GM10248 (cell line): ENCODE measurements at regions of chr5 and their contacts with region 1.

Region 1: DNA sequence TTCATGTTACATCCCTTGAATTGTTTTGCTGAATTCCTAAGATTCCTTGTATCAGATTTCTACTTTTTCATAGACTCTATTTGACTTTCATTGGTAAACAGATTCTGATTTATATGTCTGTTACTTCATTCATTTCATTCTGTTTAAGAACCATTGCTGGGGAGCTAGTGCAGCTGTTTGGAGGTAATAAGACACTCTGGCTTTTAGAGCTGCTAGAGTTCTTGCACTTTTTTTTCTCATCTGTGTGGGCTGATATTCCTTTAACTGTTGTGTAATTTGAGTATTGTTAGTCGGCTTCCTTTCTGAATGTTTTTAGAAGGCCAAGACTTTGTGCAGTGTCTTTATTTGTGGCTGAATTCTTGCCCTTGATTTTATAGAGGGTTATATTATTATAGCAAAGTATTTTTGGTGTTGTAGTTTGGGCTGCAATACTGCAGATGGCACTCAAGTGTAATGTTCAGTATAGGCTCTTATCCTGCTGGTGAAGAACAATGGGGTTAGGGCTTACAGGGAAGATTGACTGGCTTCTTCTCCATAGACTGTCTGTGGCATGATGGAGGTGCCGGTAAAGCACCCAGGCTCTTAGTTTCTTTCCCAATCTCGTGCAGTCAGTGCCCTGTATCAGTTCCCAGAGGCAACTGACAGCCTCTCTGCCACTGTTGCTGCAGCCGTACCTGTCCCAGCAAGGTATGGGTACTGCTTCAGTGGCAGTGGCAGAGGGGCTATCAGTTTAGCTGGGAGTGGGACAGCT is 162.2 kb downstream of the OXCT1 start:
- DNase-seq: peak; percentile 34
- CTCF ChIP-seq: peak; percentile 53

Region 2: DNA sequence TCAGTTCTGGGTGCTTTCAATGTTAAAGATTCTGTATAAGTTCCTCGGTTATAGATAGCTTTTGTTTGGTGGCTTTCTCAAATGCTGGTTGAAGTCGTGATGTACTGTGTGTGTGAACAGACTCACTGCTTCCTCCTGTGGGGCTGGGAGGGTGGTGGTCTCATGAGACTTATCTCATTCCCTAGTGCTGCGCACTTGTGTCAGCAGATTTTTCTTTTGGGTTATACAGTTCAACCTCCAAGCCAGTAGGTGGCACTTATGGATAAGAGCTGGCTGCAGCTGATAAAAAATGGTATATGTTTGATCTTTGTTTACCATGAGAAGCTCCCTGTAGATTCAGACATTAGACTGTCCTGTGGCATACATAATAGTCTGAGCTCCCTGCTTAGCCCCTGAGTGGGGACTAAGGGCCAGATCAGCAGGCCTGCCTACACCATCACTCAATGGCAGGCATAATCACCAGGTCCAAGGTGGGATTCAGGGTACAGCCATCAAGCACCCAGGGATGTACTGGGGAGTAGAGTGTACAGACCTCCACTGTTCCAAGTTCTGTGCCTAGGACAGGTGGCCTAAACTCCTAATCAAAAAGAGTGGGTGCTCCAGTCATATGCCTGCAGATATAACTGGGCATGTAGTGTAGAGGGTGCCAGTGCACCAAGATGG is 12.0 kb before region 1 on chr5:
- CTCF ChIA-PET with region 1: interaction called, 12 read pairs
- POLR2A ChIA-PET with region 1: no interaction called
- DNase-seq: no peak
- CTCF ChIP-seq: peak; percentile 37

Region 3: GRCh38 chr5:41722359-41722950 is 14.4 kb after region 1 on chr5:
- CTCF ChIA-PET with region 1: interaction called, 13 read pairs
- POLR2A ChIA-PET with region 1: no interaction called
- DNase-seq: no peak
- CTCF ChIP-seq: peak; percentile 43